Activated CD8-positive, alpha-beta T cell treated with anti-CD3 and anti-CD28 coated beads for 36 hours (primary cell): ENCODE measurements at regions of chr12 and their contacts with region 1.

Region 1: DNA sequence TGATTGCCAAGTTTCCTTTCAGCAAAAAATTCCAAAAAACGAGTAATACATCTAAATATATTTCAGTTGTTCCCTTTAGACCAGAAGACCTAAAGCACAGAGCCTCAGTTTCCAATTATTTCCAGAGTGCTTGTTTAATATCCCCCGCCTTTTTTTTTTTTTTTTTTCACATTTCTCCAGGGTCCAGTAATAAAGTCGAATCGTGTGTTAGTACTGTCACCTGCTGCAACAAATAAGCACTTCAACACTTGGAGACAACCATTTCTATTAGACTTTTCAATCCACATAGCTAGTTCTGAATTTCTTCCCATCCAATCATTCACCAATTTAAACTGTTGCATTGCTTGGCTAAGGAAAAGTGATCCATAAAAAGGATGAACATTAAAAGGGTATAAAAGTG is 13.6 kb downstream of the PDE6H start:
- DNase-seq: no peak
- ATAC-seq: no peak
- H3K4me3 Mint-ChIP-seq: no peak overlapping the region
- H3K27ac Mint-ChIP-seq: no peak overlapping the region
- H3K4me1 Mint-ChIP-seq: peaks cover 22% of the 10 kb centered on the region
- H3K27me3 Mint-ChIP-seq: no peaks in the 10 kb centered on the region
- CTCF ChIP-seq: no peak

Region 2: DNA sequence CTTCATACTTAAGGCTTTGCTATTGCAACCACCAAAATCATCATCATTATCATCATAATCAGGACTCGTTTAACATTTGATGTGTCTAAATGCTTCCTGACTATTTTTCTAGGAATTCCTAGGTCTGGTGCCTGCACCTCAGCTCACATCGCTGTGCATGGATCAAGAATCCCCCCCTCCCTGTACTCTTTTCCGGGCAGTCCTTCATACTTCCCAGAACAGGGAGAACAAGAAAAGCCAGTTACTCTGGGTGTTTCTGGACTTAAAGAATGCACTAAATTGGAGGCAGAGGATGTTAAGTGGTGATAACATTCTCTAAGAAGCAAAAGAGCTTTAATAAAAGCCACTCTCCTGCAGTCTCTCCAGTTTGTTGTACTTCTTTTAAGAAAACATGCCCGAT is 57.5 kb before region 1 on chr12:
- CTCF ChIA-PET with region 1: no interaction called
- POLR2A ChIA-PET with region 1: no interaction called
- intact Hi-C with region 1: no loop called
- DNase-seq: no peak
- ATAC-seq: no peak
- H3K4me3 Mint-ChIP-seq: no peak overlapping the region
- H3K27ac Mint-ChIP-seq: no peak overlapping the region
- H3K4me1 Mint-ChIP-seq: peaks cover 4% of the 10 kb centered on the region
- H3K27me3 Mint-ChIP-seq: no peaks in the 10 kb centered on the region
- CTCF ChIP-seq: no peak

Region 3: DNA sequence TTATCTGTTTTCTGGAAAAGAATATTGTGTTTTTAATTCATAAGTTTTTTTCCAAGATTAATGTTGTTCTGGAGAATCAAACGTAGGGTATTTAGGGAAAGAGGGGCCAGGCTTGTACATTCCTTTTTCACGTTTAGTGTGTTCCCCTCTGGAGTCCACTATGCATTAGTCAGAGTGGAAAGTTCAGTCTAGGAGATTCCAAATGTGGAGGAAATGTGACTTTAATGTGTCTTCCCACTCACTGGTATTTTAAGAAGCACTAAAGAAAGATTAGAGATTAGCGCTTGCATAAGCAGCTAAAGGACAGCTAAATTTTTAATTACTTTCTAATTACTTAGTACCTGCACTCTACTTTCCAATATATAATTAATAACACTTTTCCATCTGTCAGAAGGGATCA is 18.0 kb before region 1 on chr12:
- CTCF ChIA-PET with region 1: interaction called, 5 read pairs
- POLR2A ChIA-PET with region 1: interaction called, 7 read pairs
- intact Hi-C with region 1: loop called (anchors 2 kb)
- DNase-seq: no peak
- ATAC-seq: no peak
- H3K4me3 Mint-ChIP-seq: no peak overlapping the region
- H3K27ac Mint-ChIP-seq: no peak overlapping the region
- H3K4me1 Mint-ChIP-seq: peaks cover 55% of the 10 kb centered on the region
- H3K27me3 Mint-ChIP-seq: no peaks in the 10 kb centered on the region
- CTCF ChIP-seq: no peak